Activated B cell treated with CpG ODN at 0.5 μM for 24 hours (primary cell): ENCODE measurements at regions of chr9 and their contacts with region 1.

Region 1: DNA sequence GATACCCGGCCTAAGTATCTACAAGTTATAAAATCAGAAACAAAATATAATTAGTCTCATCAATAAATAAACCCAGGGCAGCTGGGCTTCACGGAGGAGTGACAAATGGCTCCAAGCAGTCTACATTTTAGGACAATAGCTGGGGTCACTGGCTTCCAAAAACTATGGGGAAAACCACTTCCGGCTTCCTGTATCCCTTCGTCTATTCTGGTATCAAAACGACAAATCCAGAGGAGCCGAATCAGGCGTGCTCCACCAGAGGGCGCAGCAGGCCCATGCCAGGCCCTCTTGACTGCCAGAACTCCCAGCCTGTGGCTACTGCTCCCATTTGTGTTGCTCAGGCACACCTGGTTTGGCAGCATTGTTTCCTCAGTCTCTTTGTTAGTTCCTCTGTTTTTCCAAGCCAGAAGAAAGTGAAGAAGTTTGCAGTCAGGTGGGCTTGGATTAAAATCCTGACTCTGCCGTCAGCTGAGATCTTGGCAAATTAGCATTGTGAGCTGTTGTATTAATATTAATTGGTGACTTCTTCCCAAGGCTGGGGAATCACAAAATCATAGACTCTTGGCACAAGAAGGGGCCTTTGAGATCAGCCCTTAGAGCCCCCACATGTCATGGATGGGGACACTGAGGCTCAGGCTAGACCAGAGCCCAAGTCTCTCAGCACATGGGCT is 11.6 kb upstream of the RAB14 start:
- DNase-seq: peak; percentile 57
- ATAC-seq: peak; percentile 76
- H3K4me3 Mint-ChIP-seq: no peak overlapping the region
- H3K27ac Mint-ChIP-seq: peak overlapping the region; percentile 59
- H3K4me1 Mint-ChIP-seq: peaks cover 24% of the 10 kb centered on the region
- H3K27me3 Mint-ChIP-seq: no peaks in the 10 kb centered on the region
- CTCF ChIP-seq: peak; percentile 53

Region 2: GRCh38 chr9:121278535-121279261 is 65.4 kb after region 1 on chr9:
- CTCF ChIA-PET with region 1: interaction called, 5 read pairs
- POLR2A ChIA-PET with region 1: interaction called, 3 read pairs
- intact Hi-C with region 1: loop called (anchors 5 kb)
- DNase-seq: no peak
- ATAC-seq: peak; percentile 84
- H3K4me3 Mint-ChIP-seq: no peak overlapping the region
- H3K27ac Mint-ChIP-seq: no peak overlapping the region
- H3K4me1 Mint-ChIP-seq: peaks cover 23% of the 10 kb centered on the region
- H3K27me3 Mint-ChIP-seq: no peaks in the 10 kb centered on the region
- CTCF ChIP-seq: peak; percentile 22

Region 3: GRCh38 chr9:121299467-121300234 is 86.4 kb after region 1 on chr9:
- CTCF ChIA-PET with region 1: no interaction called
- POLR2A ChIA-PET with region 1: no interaction called
- intact Hi-C with region 1: loop called (anchors 5 kb)
- DNase-seq: peak; percentile 49
- ATAC-seq: peak; percentile 67
- H3K4me3 Mint-ChIP-seq: peak overlapping the region; percentile 88
- H3K27ac Mint-ChIP-seq: no peak overlapping the region
- H3K4me1 Mint-ChIP-seq: peaks cover 27% of the 10 kb centered on the region
- H3K27me3 Mint-ChIP-seq: peaks cover 5% of the 10 kb centered on the region
- CTCF ChIP-seq: no peak